PC-9 (cell line): ENCODE measurements at regions of chr5 and their contacts with region 1.

Region 1: DNA sequence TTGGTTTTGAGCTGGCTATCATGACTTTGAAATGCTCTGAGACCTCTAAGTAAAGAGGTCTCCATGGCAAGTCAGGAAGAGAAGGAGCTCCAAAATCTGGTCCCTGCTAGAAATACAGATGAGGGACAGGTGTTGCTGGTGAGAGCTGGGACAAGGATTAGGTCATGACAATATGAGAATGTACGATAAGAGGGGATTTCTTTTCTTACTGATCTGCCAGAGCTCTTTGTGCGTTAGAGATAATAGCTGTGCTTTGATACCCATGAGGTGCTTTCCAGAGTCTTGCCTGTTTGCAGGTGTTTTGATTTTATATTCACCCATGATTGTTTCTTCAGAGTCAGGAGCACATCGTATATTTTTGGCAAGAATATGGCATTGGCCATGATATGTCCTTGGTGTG is 56.5 kb downstream of the ANKRD33B start:
- DNase-seq: no peak
- H3K4me3 ChIP-seq: no peak overlapping the region
- H3K27ac ChIP-seq: no peak overlapping the region
- H3K4me1 ChIP-seq: no peaks in the 10 kb centered on the region; the same call in 1 of the 2 replicates
- H3K27me3 ChIP-seq: no peaks in the 10 kb centered on the region
- CTCF ChIP-seq: no peak

Region 2: DNA sequence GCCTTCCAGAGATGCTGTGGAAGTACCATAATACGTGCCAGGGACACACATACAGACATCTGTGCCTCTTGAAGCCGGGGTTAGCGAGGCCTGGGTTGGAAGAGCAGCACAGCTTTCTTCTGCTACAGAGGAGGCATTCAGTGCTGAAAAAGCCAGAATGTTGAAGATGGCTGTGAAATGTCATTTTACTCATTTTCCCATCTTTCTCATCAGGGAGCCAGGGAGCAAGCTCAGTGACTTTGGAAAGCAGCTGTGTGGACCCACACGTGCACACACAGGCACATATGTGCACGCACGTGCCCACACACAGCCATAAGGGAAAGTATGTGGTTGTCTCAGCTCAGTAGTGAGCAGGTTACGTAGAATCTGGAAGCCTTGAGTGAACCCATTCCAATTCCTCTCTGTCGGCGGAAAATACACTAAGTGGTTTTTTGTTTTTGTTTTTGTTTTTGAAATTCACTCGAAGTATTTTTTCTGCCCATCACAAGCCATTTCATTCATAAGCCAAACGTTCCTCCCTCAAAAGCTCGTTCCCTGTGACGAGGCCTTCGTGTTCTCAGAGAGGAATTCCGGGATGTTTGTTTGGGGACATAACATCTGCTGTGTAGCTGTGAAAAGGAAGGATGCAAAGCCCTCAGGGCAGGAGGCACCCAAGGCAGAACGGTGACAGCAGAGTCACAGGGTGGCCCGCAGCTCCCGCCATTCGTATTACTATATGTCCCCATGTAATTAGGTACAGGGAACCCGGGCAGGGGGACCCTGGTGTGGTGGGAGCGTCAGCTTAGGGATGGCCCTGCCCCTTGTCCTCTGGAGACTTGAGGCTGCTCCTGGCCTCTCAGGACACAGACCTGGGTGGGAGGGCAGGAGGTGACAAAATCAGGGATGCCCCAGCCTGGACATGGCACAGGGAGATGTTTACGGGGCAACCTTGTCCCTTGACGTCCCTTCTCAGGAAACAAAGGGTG is 85.5 kb before region 1 on chr5:
- CTCF ChIA-PET with region 1: no interaction called
- POLR2A ChIA-PET with region 1: interaction called, 11 read pairs
- intact Hi-C with region 1: no loop called
- DNase-seq: no peak
- H3K4me3 ChIP-seq: no peak overlapping the region
- H3K27ac ChIP-seq: no peak overlapping the region
- H3K4me1 ChIP-seq: 0 out of 2 replicates have a peak, but pooled peaks cover 8% of the 10 kb centered on the region
- H3K27me3 ChIP-seq: no peaks in the 10 kb centered on the region
- CTCF ChIP-seq: no peak

Region 3: GRCh38 chr5:10563945-10564837 is 56.2 kb before region 1 on chr5 and contains the start of gene ANKRD33B:
- CTCF ChIA-PET with region 1: no interaction called
- POLR2A ChIA-PET with region 1: interaction called, 12 read pairs
- intact Hi-C with region 1: no loop called
- DNase-seq: peak; percentile 72 to 95
- H3K4me3 ChIP-seq: peak within 1 kb of the TSS; percentile 90
- H3K27ac ChIP-seq: peak within 1 kb of the TSS; percentile 86
- H3K4me1 ChIP-seq: peaks cover 46% of the 10 kb centered on the region
- H3K27me3 ChIP-seq: no peaks in the 10 kb centered on the region
- CTCF ChIP-seq: no peak
- total RNA-seq, gene ANKRD33B: 32.1 and 37.4 TPM in 2 replicates

Region 4: GRCh38 chr5:10684303-10685086 is 64.1 kb after region 1 on chr5:
- CTCF ChIA-PET with region 1: no interaction called
- POLR2A ChIA-PET with region 1: no interaction called
- intact Hi-C with region 1: no loop called
- DNase-seq: no peak
- H3K4me3 ChIP-seq: no peak overlapping the region
- H3K27ac ChIP-seq: no peak overlapping the region
- H3K4me1 ChIP-seq: no peaks in the 10 kb centered on the region
- H3K27me3 ChIP-seq: no peaks in the 10 kb centered on the region
- CTCF ChIP-seq: no peak

Region 5: DNA sequence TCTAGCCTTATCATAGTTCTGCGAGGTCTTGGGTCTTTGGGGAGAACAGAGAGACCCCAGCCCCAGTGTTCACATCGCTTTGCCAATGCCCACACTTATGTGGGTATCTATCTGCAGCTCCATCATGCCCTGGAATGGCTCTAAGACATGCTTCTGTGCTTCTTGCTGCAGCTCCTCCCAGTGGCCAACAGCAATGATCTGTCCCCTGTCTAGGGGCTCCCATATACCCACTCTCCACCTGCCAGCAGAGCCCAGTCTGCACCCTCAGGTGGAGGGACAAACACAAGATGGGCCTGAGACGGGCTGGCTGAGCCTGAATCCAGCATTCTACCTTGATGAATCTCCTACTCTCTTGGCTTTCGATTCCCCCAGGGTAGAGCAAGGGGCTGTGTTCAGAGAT is 155.3 kb after region 1 on chr5:
- CTCF ChIA-PET with region 1: no interaction called
- POLR2A ChIA-PET with region 1: no interaction called
- intact Hi-C with region 1: no loop called
- DNase-seq: no peak
- H3K4me3 ChIP-seq: no peak overlapping the region
- H3K27ac ChIP-seq: no peak overlapping the region
- H3K4me1 ChIP-seq: no peaks in the 10 kb centered on the region
- H3K27me3 ChIP-seq: no peaks in the 10 kb centered on the region
- CTCF ChIP-seq: no peak

Region 6: GRCh38 chr5:10797261-10797660 is 176.9 kb after region 1 on chr5:
- CTCF ChIA-PET with region 1: no interaction called
- POLR2A ChIA-PET with region 1: no interaction called
- intact Hi-C with region 1: no loop called
- DNase-seq: peak in 1 of 2 experiments; percentile 12
- H3K4me3 ChIP-seq: no peak overlapping the region
- H3K27ac ChIP-seq: no peak overlapping the region
- H3K4me1 ChIP-seq: no peaks in the 10 kb centered on the region
- H3K27me3 ChIP-seq: no peaks in the 10 kb centered on the region
- CTCF ChIP-seq: no peak